HepG2 (cell line): ENCODE measurements at regions of chr17 and their contacts with region 1.

Region 1: GRCh38 chr17:38557836-38558727 is 47.7 kb downstream of the SRCIN1 start:
- DNase-seq: peak; percentile 89
- ATAC-seq: peak; percentile 79
- H3K4me3 ChIP-seq: peak overlapping the region; percentile 19 to 67 (median 51); a peak in 5 of 6 replicates
- H3K27ac ChIP-seq: no peak overlapping the region
- H3K4me1 ChIP-seq: peaks cover 39% of the 10 kb centered on the region
- H3K27me3 ChIP-seq: peaks cover 0 to 2% of the 10 kb centered on the region in 2 experiments; a peak in 1 of 5 replicates
- CTCF ChIP-seq: peak; percentile 100
- EP300 ChIP-seq: no peak
- POLR2A ChIP-seq: no peak
- RAD21 ChIP-seq: peak; percentile 99

Region 2: GRCh38 chr17:38509008-38509771 is 48.9 kb before region 1 on chr17:
- CTCF ChIA-PET with region 1: no interaction called
- POLR2A ChIA-PET with region 1: interaction called, 3 read pairs
- in situ Hi-C with region 1: no loop called
- intact Hi-C with region 1: loop called (anchors 5 kb)
- DNase-seq: peak; percentile 84
- ATAC-seq: peak; percentile 83
- H3K4me3 ChIP-seq: peak overlapping the region; percentile 0 to 66 (median 4); a peak in 2 of 6 replicates
- H3K27ac ChIP-seq: no peak overlapping the region
- H3K4me1 ChIP-seq: peaks cover 25% of the 10 kb centered on the region
- H3K27me3 ChIP-seq: peaks cover 8 to 73% of the 10 kb centered on the region in 2 experiments; a peak in 4 of 5 replicates
- CTCF ChIP-seq: peak; percentile 84
- EP300 ChIP-seq: no peak
- POLR2A ChIP-seq: no peak
- RAD21 ChIP-seq: peak; percentile 72

Region 3: GRCh38 chr17:38584350-38584925 is 26.4 kb after region 1 on chr17:
- CTCF ChIA-PET with region 1: interaction called, 10 read pairs
- POLR2A ChIA-PET with region 1: interaction called, 7 read pairs
- in situ Hi-C with region 1: loop called (anchors 5 kb)
- intact Hi-C with region 1: loop called (anchors 1 kb)
- DNase-seq: peak; percentile 41
- ATAC-seq: peak; percentile 73
- H3K4me3 ChIP-seq: peak overlapping the region in 1 of 3 experiments; percentile 47; a peak in 1 of 6 replicates
- H3K27ac ChIP-seq: no peak overlapping the region
- H3K4me1 ChIP-seq: peaks cover 49% of the 10 kb centered on the region
- H3K27me3 ChIP-seq: peaks cover 0 to 25% of the 10 kb centered on the region in 2 experiments; a peak in 3 of 5 replicates
- CTCF ChIP-seq: peak; percentile 94
- EP300 ChIP-seq: no peak
- POLR2A ChIP-seq: no peak
- RAD21 ChIP-seq: peak; percentile 91

Region 4: GRCh38 chr17:38605888-38606645 is 48.0 kb after region 1 on chr17 and contains the start of gene SRCIN1:
- CTCF ChIA-PET with region 1: interaction called, 4 read pairs
- POLR2A ChIA-PET with region 1: interaction called, 17 read pairs
- in situ Hi-C with region 1: no loop called
- intact Hi-C with region 1: no loop called
- DNase-seq: peak; percentile 57
- ATAC-seq: peak; percentile 42
- H3K4me3 ChIP-seq: peak within 1 kb of the TSS; percentile 76 to 84 (median 83)
- H3K27ac ChIP-seq: peak within 1 kb of the TSS; percentile 88
- H3K4me1 ChIP-seq: peaks cover 89% of the 10 kb centered on the region
- H3K27me3 ChIP-seq: no peaks in the 10 kb centered on the region
- CTCF ChIP-seq: peak; percentile 95
- EP300 ChIP-seq: 0 out of 4 replicates have a peak, but pooled peaks have one; percentile 28 to 30
- POLR2A ChIP-seq: peak; percentile 45 to 62; a peak in 3 of 4 replicates
- RAD21 ChIP-seq: peak; percentile 100
- total RNA-seq, gene SRCIN1: 0.90 and 1.2 TPM in 2 replicates

Region 5: DNA sequence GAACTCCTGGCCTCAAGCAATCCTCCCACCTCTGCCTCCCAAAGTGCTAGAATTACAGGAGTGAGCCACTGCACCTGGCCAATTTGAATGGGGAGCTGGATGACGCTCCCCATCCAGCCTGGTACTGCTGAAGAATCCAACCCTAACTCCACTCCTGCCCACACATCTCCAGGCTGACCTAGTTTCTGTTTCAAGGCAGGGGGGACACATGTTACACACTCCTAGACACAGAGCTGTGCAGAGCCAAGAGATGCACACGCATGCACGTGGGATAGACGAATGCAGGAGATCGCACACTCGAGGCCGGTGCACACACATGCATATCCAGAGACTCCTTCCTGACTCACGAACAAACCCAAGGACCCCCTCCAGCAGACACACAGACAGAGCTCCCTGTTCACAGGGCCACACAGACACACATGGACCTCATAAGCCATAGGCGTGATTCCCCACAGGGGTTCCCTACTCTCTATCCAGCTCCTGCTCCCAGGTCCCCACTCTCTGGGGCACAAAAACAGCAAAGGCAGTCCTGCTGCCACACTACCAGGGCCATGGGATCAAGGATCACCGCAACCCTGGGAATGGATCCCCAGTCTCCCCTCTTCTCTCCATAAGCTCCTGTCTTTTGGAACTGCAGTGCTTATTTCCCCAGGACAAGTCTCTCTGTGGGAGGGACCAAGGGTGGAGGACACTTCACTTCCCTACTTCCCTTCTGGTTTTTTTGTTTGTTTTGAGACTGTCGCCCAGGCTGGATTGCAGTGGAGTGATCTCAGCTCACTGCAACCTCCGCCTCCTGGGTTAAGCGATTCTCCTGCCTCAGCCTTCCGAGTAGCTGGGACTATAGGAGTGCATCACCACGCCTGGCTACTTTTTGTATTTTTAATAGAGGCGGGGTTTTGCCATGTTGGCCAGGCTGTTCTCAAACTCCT is 102.3 kb after region 1 on chr17:
- CTCF ChIA-PET with region 1: interaction called, 15 read pairs
- POLR2A ChIA-PET with region 1: interaction called, 27 read pairs
- in situ Hi-C with region 1: loop called (anchors 5 kb)
- intact Hi-C with region 1: no loop called
- DNase-seq: no peak
- ATAC-seq: no peak
- H3K4me3 ChIP-seq: no peak overlapping the region
- H3K27ac ChIP-seq: peak overlapping the region; percentile 75
- H3K4me1 ChIP-seq: peaks cover 85% of the 10 kb centered on the region
- H3K27me3 ChIP-seq: no peaks in the 10 kb centered on the region
- CTCF ChIP-seq: no peak
- EP300 ChIP-seq: no peak
- POLR2A ChIP-seq: no peak
- RAD21 ChIP-seq: 0 out of 2 replicates have a peak, but pooled peaks have one; percentile 19

Region 6: DNA sequence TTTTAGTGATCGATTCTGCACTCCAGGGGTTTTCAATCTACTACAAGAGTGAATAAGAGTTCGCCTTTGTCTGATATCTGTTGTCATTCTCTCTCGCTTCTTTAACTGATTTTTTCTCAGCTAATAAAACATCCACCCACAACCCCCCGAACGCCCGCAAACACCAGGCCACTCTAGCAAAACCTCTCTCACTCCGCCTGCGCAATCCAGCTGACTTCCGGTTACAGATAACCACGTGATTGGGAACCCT is 641.7 kb after region 1 on chr17:
- CTCF ChIA-PET with region 1: no interaction called
- POLR2A ChIA-PET with region 1: interaction called, 10 read pairs
- in situ Hi-C with region 1: no loop called
- intact Hi-C with region 1: no loop called
- DNase-seq: peak; percentile 96
- ATAC-seq: peak; percentile 61
- H3K4me3 ChIP-seq: peak overlapping the region; percentile 65 to 92 (median 77)
- H3K27ac ChIP-seq: peak overlapping the region; percentile 97
- H3K4me1 ChIP-seq: peaks cover 59% of the 10 kb centered on the region
- H3K27me3 ChIP-seq: no peaks in the 10 kb centered on the region; a peak in 1 of 5 replicates
- CTCF ChIP-seq: no peak
- EP300 ChIP-seq: no peak
- POLR2A ChIP-seq: no peak; a peak in 2 of 4 replicates
- RAD21 ChIP-seq: no peak